B cell (primary cell): ENCODE measurements at regions of chr14 and their contacts with region 1.

Region 1: GRCh38 chr14:24114536-24115450 is at the starts of genes DCAF11 and NRL:
- DNase-seq: peak; percentile 100
- ATAC-seq: peak; percentile 81
- H3K4me3 ChIP-seq: peak within 1 kb of the TSS; percentile 88 to 99 (median 97)
- H3K4me3 Mint-ChIP-seq: peak within 1 kb of the TSS; percentile 93
- H3K27ac ChIP-seq: peak within 1 kb of the TSS; percentile 99 to 100
- H3K27ac Mint-ChIP-seq: peak within 1 kb of the TSS; percentile 100
- H3K4me1 ChIP-seq: peaks cover 17 to 25% of the 10 kb centered on the region in 2 donors
- H3K4me1 Mint-ChIP-seq: peaks cover 26% of the 10 kb centered on the region
- H3K27me3 ChIP-seq: no peaks in the 10 kb centered on the region
- H3K27me3 Mint-ChIP-seq: no peaks in the 10 kb centered on the region
- CTCF ChIP-seq: no peak
- total RNA-seq, gene DCAF11: 84.8 and 96.3 TPM in 2 replicates
- total RNA-seq, gene NRL: 8.1 and 8.8 TPM in 2 replicates

Region 2: DNA sequence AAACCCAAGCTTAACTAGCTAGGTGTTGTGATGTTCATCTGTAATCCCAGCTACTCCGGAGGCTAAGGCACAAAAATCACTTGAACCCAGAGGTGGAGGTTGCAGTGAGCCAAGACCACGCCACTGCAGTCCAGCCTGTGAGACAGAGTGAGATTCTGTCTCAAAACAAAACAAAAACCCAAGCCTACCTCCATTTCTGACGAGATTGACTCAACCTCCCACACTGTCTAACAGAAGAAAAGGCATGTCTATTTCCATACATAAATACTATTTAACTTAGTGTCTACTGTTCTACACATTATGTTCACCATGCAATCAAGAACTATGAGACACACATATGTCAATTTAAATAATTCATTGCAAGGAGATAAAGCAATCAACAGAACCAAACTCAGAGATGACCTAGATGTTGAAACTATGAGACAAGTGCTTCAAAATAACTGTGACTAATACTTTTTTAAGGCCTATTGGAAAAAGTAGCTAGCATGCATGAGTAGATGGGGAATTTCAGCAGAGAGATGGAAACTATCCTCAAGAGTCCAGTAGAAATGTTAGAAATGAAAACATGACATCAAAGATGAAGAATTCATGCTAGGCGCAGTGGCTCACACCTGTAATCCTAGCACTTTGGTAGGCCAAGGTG is 237.1 kb before region 1 on chr14:
- CTCF ChIA-PET with region 1: no interaction called
- POLR2A ChIA-PET with region 1: no interaction called
- intact Hi-C with region 1: no loop called
- DNase-seq: no peak
- ATAC-seq: no peak
- H3K4me3 ChIP-seq: no peak overlapping the region
- H3K4me3 Mint-ChIP-seq: no peak overlapping the region
- H3K27ac ChIP-seq: no peak overlapping the region
- H3K27ac Mint-ChIP-seq: no peak overlapping the region
- H3K4me1 ChIP-seq: no peaks in the 10 kb centered on the region
- H3K4me1 Mint-ChIP-seq: no peaks in the 10 kb centered on the region
- H3K27me3 ChIP-seq: peaks cover 0 to 12% (median 0%) of the 10 kb centered on the region in 4 experiments
- H3K27me3 Mint-ChIP-seq: peaks cover 24% of the 10 kb centered on the region
- CTCF ChIP-seq: no peak

Region 3: DNA sequence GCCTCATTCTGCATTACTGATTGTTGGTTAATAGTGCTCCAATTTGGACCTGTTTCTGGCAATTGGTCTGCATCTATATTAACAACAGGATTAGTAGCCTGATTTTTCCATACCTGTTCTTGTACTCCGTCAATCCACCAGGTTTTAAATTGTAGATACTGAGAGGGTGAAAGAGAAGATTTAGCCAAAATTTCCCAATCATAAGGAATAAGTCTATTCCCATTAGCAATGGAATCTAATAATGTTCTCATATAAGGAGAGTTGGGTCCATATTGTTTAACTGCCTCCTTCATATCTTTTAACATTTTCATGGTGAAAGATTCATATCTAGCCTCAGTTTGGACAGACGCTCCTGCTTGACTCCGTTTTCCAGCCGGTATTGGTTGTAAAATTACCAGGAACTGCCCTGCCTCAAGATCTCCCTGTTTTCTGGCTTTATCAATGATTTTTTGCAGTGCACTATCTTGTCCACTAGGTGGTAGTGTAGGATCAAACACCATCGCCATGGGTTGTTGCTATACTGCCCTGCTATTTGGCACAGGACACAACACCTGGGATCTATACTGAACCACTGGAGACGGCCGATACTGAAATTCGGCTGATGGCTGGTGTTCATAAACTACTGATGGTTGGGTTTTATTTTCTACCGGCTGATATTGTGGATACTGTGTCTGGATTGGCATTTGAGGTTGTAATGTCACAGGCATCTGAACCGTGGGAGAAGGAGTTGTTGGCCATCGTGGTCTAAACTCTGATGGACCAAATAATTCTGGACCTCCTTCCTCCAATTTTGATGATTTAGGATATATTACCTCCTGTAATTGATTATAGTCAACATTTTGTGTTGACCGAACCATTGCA is 100.9 kb before region 1 on chr14:
- CTCF ChIA-PET with region 1: interaction called, 19 read pairs
- POLR2A ChIA-PET with region 1: no interaction called
- intact Hi-C with region 1: loop called (anchors 1 kb)
- DNase-seq: peak; percentile 83
- ATAC-seq: peak; percentile 92
- H3K4me3 ChIP-seq: no peak overlapping the region
- H3K4me3 Mint-ChIP-seq: no peak overlapping the region
- H3K27ac ChIP-seq: no peak overlapping the region
- H3K27ac Mint-ChIP-seq: no peak overlapping the region
- H3K4me1 ChIP-seq: peaks cover 0 to 3% of the 10 kb centered on the region in 2 donors
- H3K4me1 Mint-ChIP-seq: peaks cover 30% of the 10 kb centered on the region
- H3K27me3 ChIP-seq: no peaks in the 10 kb centered on the region
- H3K27me3 Mint-ChIP-seq: no peaks in the 10 kb centered on the region
- CTCF ChIP-seq: peak; percentile 97

Region 4: GRCh38 chr14:24093901-24094761 is 20.7 kb before region 1 on chr14 and contains the start of gene PCK2:
- CTCF ChIA-PET with region 1: interaction called, 292 read pairs
- POLR2A ChIA-PET with region 1: interaction called, 35 read pairs
- intact Hi-C with region 1: loop called (anchors 1 kb)
- DNase-seq: peak; percentile 81
- ATAC-seq: peak; percentile 66
- H3K4me3 ChIP-seq: peak within 1 kb of the TSS; percentile 62 to 97 (median 89)
- H3K4me3 Mint-ChIP-seq: peak within 1 kb of the TSS; percentile 95
- H3K27ac ChIP-seq: peak within 1 kb of the TSS; percentile 80 to 95
- H3K27ac Mint-ChIP-seq: peak within 1 kb of the TSS; percentile 92
- H3K4me1 ChIP-seq: peaks cover 5 to 35% of the 10 kb centered on the region in 2 donors
- H3K4me1 Mint-ChIP-seq: peaks cover 38% of the 10 kb centered on the region
- H3K27me3 ChIP-seq: no peaks in the 10 kb centered on the region
- H3K27me3 Mint-ChIP-seq: no peaks in the 10 kb centered on the region
- CTCF ChIP-seq: peak; percentile 28
- total RNA-seq, gene PCK2: 34.1 and 40.4 TPM in 2 replicates

Region 5: GRCh38 chr14:24160850-24161804 is 46.3 kb after region 1 on chr14 and contains the start of gene IRF9:
- CTCF ChIA-PET with region 1: interaction called, 63 read pairs
- POLR2A ChIA-PET with region 1: interaction called, 35 read pairs
- intact Hi-C with region 1: loop called (anchors 1 kb)
- DNase-seq: peak; percentile 97
- ATAC-seq: peak; percentile 94
- H3K4me3 ChIP-seq: peak within 1 kb of the TSS; percentile 69 to 100 (median 91)
- H3K4me3 Mint-ChIP-seq: peak within 1 kb of the TSS; percentile 100
- H3K27ac ChIP-seq: peak within 1 kb of the TSS; percentile 85 to 88
- H3K27ac Mint-ChIP-seq: peak within 1 kb of the TSS; percentile 99
- H3K4me1 ChIP-seq: peaks cover 29 to 39% of the 10 kb centered on the region in 2 donors
- H3K4me1 Mint-ChIP-seq: peaks cover 42% of the 10 kb centered on the region
- H3K27me3 ChIP-seq: no peaks in the 10 kb centered on the region
- H3K27me3 Mint-ChIP-seq: no peaks in the 10 kb centered on the region
- CTCF ChIP-seq: peak; percentile 81
- total RNA-seq, gene IRF9: 243 and 269 TPM in 2 replicates

Region 6: GRCh38 chr14:24215495-24216344 is 100.9 kb after region 1 on chr14 and contains the start of gene MDP1:
- CTCF ChIA-PET with region 1: interaction called, 4 read pairs
- POLR2A ChIA-PET with region 1: interaction called, 4 read pairs
- intact Hi-C with region 1: loop called (anchors 1 kb)
- DNase-seq: peak; percentile 94
- ATAC-seq: peak; percentile 75
- H3K4me3 ChIP-seq: peak within 1 kb of the TSS; percentile 88 to 99 (median 96)
- H3K4me3 Mint-ChIP-seq: peak within 1 kb of the TSS; percentile 93
- H3K27ac ChIP-seq: peak within 1 kb of the TSS; percentile 89 to 98
- H3K27ac Mint-ChIP-seq: peak within 1 kb of the TSS; percentile 96
- H3K4me1 ChIP-seq: peaks cover 32 to 33% of the 10 kb centered on the region in 2 donors
- H3K4me1 Mint-ChIP-seq: peaks cover 38% of the 10 kb centered on the region
- H3K27me3 ChIP-seq: no peaks in the 10 kb centered on the region
- H3K27me3 Mint-ChIP-seq: no peaks in the 10 kb centered on the region
- CTCF ChIP-seq: peak; percentile 80
- total RNA-seq, gene MDP1: 11.3 and 17.0 TPM in 2 replicates

Region 7: DNA sequence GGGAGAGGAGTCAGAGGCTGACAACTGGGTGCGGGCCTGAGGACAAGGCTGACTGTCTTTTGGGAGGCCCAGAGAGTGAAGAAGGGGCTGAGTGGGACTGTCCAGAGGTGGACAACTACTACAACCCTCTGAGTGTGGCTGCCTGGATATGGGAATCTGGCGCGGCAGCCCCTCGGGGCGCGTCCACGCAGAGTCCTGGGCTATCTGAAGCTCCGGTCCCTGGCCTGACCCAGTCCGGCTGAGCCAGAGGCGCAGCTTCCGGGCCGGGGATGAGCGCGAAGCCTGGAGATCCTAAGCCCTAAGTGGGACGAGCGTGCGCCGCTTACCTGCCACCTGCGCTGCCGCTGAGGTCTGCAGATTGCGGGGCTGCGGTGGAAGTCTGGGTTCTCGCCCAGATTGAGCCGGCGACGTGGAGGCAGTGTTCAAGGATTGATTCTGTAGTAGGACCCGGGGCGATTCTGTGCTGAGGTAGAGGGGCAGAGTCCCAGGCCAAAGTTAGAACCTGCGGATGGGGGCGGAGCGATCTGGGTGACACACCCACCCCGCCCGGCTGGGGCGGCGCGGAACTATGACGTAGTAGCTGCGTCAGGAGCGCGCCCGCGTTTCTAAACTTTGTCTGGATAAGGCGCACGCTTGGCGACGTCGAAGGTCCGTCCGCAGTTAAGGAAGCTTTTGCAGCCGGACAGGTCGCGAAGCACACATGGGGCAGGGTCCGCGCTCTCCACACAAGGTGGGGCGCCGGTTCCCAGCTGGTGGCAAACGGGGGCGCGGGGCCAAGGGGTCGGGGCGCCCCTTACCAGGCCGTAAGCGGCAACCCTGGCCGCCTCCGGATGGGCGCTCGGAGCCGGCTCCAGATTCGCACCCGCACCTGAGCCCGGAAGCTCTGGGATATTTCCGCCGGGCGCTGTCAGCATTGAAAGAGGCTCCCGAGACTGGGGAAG is 184.7 kb after region 1 on chr14 and contains the starts of genes DHRS1 and NOP9:
- CTCF ChIA-PET with region 1: interaction called, 11 read pairs
- POLR2A ChIA-PET with region 1: no interaction called
- intact Hi-C with region 1: loop called (anchors 2 kb)
- DNase-seq: peak; percentile 95
- ATAC-seq: peak; percentile 86
- H3K4me3 ChIP-seq: peak within 1 kb of the TSS; percentile 58 to 93 (median 77)
- H3K4me3 Mint-ChIP-seq: peak within 1 kb of the TSS; percentile 96
- H3K27ac ChIP-seq: peak within 1 kb of the TSS; percentile 79 to 83
- H3K27ac Mint-ChIP-seq: peak within 1 kb of the TSS; percentile 98
- H3K4me1 ChIP-seq: peaks cover 30 to 41% of the 10 kb centered on the region in 2 donors
- H3K4me1 Mint-ChIP-seq: peaks cover 48% of the 10 kb centered on the region
- H3K27me3 ChIP-seq: no peaks in the 10 kb centered on the region
- H3K27me3 Mint-ChIP-seq: no peaks in the 10 kb centered on the region
- CTCF ChIP-seq: no peak
- total RNA-seq, gene DHRS1: 42.7 and 43.7 TPM in 2 replicates
- total RNA-seq, gene NOP9: 22.6 and 24.5 TPM in 2 replicates

Region 8: GRCh38 chr14:24327303-24327702 is 212.5 kb after region 1 on chr14:
- CTCF ChIA-PET with region 1: no interaction called
- POLR2A ChIA-PET with region 1: no interaction called
- intact Hi-C with region 1: no loop called
- DNase-seq: no peak
- ATAC-seq: no peak
- H3K4me3 ChIP-seq: no peak overlapping the region
- H3K4me3 Mint-ChIP-seq: no peak overlapping the region
- H3K27ac ChIP-seq: no peak overlapping the region
- H3K27ac Mint-ChIP-seq: no peak overlapping the region
- H3K4me1 ChIP-seq: peaks cover 12 to 17% of the 10 kb centered on the region in 2 donors
- H3K4me1 Mint-ChIP-seq: peaks cover 22% of the 10 kb centered on the region
- H3K27me3 ChIP-seq: peaks cover 0 to 6% (median under 1%) of the 10 kb centered on the region in 4 experiments
- H3K27me3 Mint-ChIP-seq: peaks cover 1% of the 10 kb centered on the region
- CTCF ChIP-seq: no peak